ENCODE measurements at regions of chr1 and their contacts with region 1.

Region 1: GRCh38 chr1:76154206-76154956 is 79.8 kb downstream of the ST6GALNAC3 start:
- DNase-seq: peak; percentile 68 to 84 (median 81)
- ATAC-seq: peak; percentile 95
- H3K4me3 ChIP-seq: peak overlapping the region; percentile 80
- H3K4me3 Mint-ChIP-seq: peak overlapping the region; percentile 82 to 96 (median 92)
- H3K27ac ChIP-seq: peak overlapping the region; percentile 46
- H3K27ac Mint-ChIP-seq: peak overlapping the region; percentile 39 to 94 (median 90)
- H3K4me1 ChIP-seq: peaks cover 0 to 3% of the 10 kb centered on the region in 2 donors
- H3K4me1 Mint-ChIP-seq: peaks cover 7 to 15% (median 10%) of the 10 kb centered on the region in 7 donors
- H3K27me3 ChIP-seq: no peaks in the 10 kb centered on the region
- H3K27me3 Mint-ChIP-seq: peaks cover 0 to 9% (median 0%) of the 10 kb centered on the region in 5 donors

Region 2: DNA sequence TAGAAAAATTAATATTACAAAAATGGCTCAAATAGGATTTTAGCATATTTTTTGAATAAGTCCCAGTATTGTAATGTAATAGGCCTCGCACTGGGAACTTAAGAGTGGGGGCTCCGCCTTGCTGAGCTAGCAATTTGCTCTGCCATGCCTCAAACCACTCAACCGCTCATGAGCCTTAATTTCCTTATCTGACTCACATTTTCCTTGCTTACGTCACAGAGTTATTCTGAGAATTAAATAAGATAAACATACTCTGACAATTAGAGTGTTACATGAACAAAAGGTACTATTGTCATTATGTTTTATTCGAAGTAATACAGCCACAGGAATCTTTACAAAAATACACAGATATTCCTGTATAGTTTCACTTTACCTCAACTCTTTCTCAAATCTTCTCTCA is 651.6 kb before region 1 on chr1:
- CTCF ChIA-PET with region 1: no interaction called
- POLR2A ChIA-PET with region 1: no interaction called
- intact Hi-C with region 1: no loop called
- DNase-seq: no peak
- ATAC-seq: no peak
- H3K4me3 ChIP-seq: no peak overlapping the region
- H3K4me3 Mint-ChIP-seq: no peak overlapping the region
- H3K27ac ChIP-seq: no peak overlapping the region
- H3K27ac Mint-ChIP-seq: no peak overlapping the region
- H3K4me1 ChIP-seq: no peaks in the 10 kb centered on the region
- H3K4me1 Mint-ChIP-seq: peaks cover 0 to 2% (median 0%) of the 10 kb centered on the region in 7 donors
- H3K27me3 ChIP-seq: no peaks in the 10 kb centered on the region
- H3K27me3 Mint-ChIP-seq: peaks cover 0 to 10% (median 0%) of the 10 kb centered on the region in 5 donors

Region 3: DNA sequence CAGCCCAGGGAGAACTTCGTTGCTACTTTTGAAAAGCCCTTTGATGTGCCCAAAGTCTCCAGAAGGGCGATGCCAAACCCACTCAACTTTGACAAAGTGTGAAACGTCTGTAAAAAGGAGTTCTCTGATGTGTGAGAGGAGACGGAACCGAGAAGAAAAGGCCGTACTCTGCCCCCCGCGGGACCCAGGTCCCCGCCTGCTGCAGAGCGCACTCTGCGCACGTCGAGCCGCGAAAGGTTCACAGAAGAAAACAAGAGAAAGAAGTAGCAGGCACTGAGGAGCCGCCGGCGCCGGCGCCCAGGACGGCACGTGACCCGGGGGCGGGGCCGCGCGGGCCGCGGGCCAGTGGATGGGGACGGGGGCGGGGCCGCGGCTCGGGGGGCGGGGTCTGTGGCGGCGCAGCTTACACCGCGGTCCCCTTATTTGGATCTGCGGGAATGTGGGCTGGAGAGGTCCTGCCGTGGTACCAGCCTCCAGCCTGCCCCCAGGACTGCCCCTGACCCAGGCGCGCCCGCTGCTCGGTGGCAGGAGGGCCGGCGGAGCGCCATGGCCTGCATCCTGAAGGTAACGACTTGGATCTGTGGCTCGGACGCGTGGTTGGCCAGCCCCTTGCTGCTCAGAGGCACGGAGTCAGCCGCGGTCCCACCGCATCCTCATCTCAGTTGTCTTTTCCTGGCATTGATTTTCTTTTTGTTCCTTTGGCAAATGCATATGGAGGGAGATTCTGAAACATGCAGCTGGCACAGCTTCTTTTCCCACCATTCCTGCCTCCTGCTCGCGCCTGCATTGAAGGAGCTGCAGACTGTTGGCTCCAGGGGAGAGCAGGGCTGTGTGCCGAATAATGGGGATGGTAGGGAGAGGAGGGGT is 79.8 kb before region 1 on chr1 and contains the start of gene ST6GALNAC3:
- CTCF ChIA-PET with region 1: no interaction called
- POLR2A ChIA-PET with region 1: no interaction called
- intact Hi-C with region 1: loop called in 1 of 2 experiments (anchors 1 kb)
- DNase-seq: peak; percentile 73 to 85 (median 81)
- ATAC-seq: peak; percentile 98
- H3K4me3 ChIP-seq: peak within 1 kb of the TSS; percentile 74
- H3K4me3 Mint-ChIP-seq: peak within 1 kb of the TSS; percentile 86 to 93 (median 91)
- H3K27ac ChIP-seq: peak within 1 kb of the TSS; percentile 71
- H3K27ac Mint-ChIP-seq: peak within 1 kb of the TSS; percentile 56 to 97 (median 92)
- H3K4me1 ChIP-seq: peaks cover 9 to 15% of the 10 kb centered on the region in 2 donors
- H3K4me1 Mint-ChIP-seq: peaks cover 8 to 35% (median 26%) of the 10 kb centered on the region in 7 donors
- H3K27me3 ChIP-seq: no peaks in the 10 kb centered on the region
- H3K27me3 Mint-ChIP-seq: peaks cover 0 to 19% (median 0%) of the 10 kb centered on the region in 5 donors
- total RNA-seq, gene ST6GALNAC3: 1.9 to 4.8 (median 3.6) TPM in 4 of 5 experiments, not detected in the other

Region 4: GRCh38 chr1:76330991-76331603 is 176.7 kb after region 1 on chr1:
- CTCF ChIA-PET with region 1: interaction called, 6 read pairs
- POLR2A ChIA-PET with region 1: no interaction called
- intact Hi-C with region 1: loop called (anchors 1 kb)
- DNase-seq: peak in 7 of 9 donors; percentile 19 to 56 (median 51)
- ATAC-seq: peak; percentile 63
- H3K4me3 ChIP-seq: no peak overlapping the region
- H3K4me3 Mint-ChIP-seq: no peak overlapping the region
- H3K27ac ChIP-seq: no peak overlapping the region
- H3K27ac Mint-ChIP-seq: peak overlapping the region in 1 of 9 donors; percentile 16
- H3K4me1 ChIP-seq: no peaks in the 10 kb centered on the region
- H3K4me1 Mint-ChIP-seq: peaks cover 0 to 41% (median 14%) of the 10 kb centered on the region in 7 donors
- H3K27me3 ChIP-seq: no peaks in the 10 kb centered on the region
- H3K27me3 Mint-ChIP-seq: no peaks in the 10 kb centered on the region

Region 5: DNA sequence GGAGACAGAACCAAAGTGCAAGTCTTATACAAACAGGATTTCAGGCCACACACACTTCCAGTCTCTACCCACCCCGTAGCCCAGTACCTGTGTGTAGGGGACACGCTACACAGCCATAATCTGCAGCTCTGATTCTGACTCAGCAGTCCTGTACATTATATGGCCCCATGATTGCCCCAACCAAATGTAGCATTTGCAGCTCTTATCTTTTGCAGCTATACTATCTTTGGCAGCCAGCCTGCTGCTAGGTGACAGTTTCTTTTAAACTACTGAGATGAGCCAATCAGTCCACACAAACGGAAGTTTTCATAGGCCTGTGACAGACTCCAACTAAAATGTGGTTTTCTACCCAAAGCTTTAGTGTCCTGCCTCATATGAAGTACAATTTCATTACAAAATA is 453.3 kb after region 1 on chr1:
- CTCF ChIA-PET with region 1: no interaction called
- POLR2A ChIA-PET with region 1: no interaction called
- intact Hi-C with region 1: loop called (anchors 10 kb)
- DNase-seq: no peak
- ATAC-seq: no peak
- H3K4me3 ChIP-seq: no peak overlapping the region
- H3K4me3 Mint-ChIP-seq: no peak overlapping the region
- H3K27ac ChIP-seq: no peak overlapping the region
- H3K27ac Mint-ChIP-seq: no peak overlapping the region
- H3K4me1 ChIP-seq: no peaks in the 10 kb centered on the region
- H3K4me1 Mint-ChIP-seq: peaks cover 0 to 1% (median 0%) of the 10 kb centered on the region in 7 donors
- H3K27me3 ChIP-seq: no peaks in the 10 kb centered on the region
- H3K27me3 Mint-ChIP-seq: no peaks in the 10 kb centered on the region

Region 6: GRCh38 chr1:76770979-76771378 is 616.6 kb after region 1 on chr1:
- CTCF ChIA-PET with region 1: no interaction called
- POLR2A ChIA-PET with region 1: no interaction called
- intact Hi-C with region 1: loop called in 1 of 2 experiments (anchors 2 kb)
- DNase-seq: no peak
- ATAC-seq: no peak
- H3K4me3 ChIP-seq: no peak overlapping the region
- H3K4me3 Mint-ChIP-seq: no peak overlapping the region
- H3K27ac ChIP-seq: no peak overlapping the region
- H3K27ac Mint-ChIP-seq: no peak overlapping the region
- H3K4me1 ChIP-seq: no peaks in the 10 kb centered on the region
- H3K4me1 Mint-ChIP-seq: no peaks in the 10 kb centered on the region
- H3K27me3 ChIP-seq: no peaks in the 10 kb centered on the region
- H3K27me3 Mint-ChIP-seq: peaks cover 0 to 17% (median 10%) of the 10 kb centered on the region in 5 donors

Region 7: GRCh38 chr1:77143529-77144121 is 989.2 kb after region 1 on chr1:
- CTCF ChIA-PET with region 1: interaction called, 12 read pairs
- POLR2A ChIA-PET with region 1: no interaction called
- intact Hi-C with region 1: loop called (anchors 1 kb)
- DNase-seq: peak in 4 of 9 donors; percentile 9 to 31 (median 18)
- ATAC-seq: no peak
- H3K4me3 ChIP-seq: no peak overlapping the region
- H3K4me3 Mint-ChIP-seq: no peak overlapping the region
- H3K27ac ChIP-seq: no peak overlapping the region
- H3K27ac Mint-ChIP-seq: no peak overlapping the region
- H3K4me1 ChIP-seq: peaks cover 0 to 3% of the 10 kb centered on the region in 2 donors
- H3K4me1 Mint-ChIP-seq: peaks cover 0 to 8% (median 6%) of the 10 kb centered on the region in 7 donors
- H3K27me3 ChIP-seq: no peaks in the 10 kb centered on the region
- H3K27me3 Mint-ChIP-seq: no peaks in the 10 kb centered on the region

Region 8: DNA sequence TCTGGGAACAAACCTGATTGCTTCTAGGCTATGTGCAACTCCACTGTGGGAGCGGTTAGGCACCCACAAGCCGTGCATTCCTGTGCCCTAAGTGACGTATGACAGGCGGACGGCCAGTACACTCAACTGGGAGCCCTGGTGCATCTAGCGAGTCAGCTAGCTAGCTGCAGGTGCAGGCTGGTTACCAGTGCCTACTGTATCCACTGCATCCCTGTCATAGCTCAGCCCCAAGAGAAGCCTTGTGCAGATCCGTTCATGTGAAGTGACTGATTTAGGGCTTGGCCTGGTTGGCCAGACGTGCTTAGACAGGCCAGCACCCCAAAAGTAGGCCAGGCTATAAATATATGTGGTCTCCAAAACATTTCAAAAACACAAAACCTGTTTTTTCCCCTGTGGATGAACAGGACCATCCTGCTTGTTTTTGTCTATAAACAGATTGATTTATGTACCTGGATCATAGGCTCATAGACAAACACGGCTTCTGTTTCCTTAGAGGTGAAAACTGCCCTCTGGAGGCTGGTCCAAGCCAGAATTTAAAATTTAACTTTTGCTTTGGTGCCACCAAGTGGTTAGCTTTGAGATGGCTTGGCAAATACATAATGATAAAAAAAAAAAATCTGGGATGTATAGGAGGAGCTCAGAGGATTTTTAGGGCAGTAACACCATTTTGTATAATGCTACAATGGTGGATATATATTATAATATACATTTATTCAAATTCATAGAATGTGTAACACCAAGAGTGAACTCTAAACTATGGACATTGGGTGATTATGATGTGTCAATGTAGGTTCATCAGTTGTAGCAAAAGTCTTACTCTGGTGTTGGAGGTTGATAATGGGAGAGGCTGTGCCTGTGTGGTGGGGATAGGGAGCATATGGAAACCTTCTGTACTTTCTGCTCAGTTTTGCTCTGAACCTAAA is 1959.9 kb after region 1 on chr1:
- CTCF ChIA-PET with region 1: interaction called, 4 read pairs
- POLR2A ChIA-PET with region 1: no interaction called
- intact Hi-C with region 1: loop called in 1 of 2 experiments (anchors 1 kb)
- DNase-seq: peak; percentile 15 to 71 (median 58)
- ATAC-seq: peak; percentile 93
- H3K4me3 ChIP-seq: no peak overlapping the region
- H3K4me3 Mint-ChIP-seq: no peak overlapping the region
- H3K27ac ChIP-seq: no peak overlapping the region
- H3K27ac Mint-ChIP-seq: no peak overlapping the region
- H3K4me1 ChIP-seq: no peaks in the 10 kb centered on the region
- H3K4me1 Mint-ChIP-seq: peaks cover 0 to 9% (median 0%) of the 10 kb centered on the region in 7 donors
- H3K27me3 ChIP-seq: no peaks in the 10 kb centered on the region
- H3K27me3 Mint-ChIP-seq: peaks cover 0 to 2% (median 0%) of the 10 kb centered on the region in 5 donors

Measured in naive thymus-derived CD4-positive, alpha-beta T cell (primary cell).